Tibial artery (tissue), 4 donors: ENCODE measurements at regions of chr6 and their contacts with region 1.

Region 1: DNA sequence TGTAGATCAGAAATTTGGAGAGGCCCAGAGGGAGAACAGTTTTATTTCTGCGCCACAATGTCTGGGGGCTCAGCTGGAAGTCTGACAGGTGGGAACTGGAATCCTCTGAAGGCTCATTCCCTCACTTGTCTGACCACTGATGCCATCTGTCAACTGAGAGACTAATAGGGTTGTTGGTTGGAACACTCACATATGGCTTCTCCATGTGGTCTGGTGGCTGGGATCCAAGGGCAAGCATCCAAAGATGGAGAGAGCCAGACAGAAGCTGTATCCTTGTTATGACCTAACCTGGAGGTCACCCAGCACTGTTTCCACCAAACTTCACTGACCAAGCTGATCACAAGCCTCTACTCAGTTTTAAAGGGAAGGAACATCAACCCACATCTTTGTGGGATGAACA is 117.9 kb upstream of the AKAP12 start:
- DNase-seq: no peak
- H3K4me3 ChIP-seq: no peak overlapping the region
- H3K27ac ChIP-seq: no peak overlapping the region
- H3K4me1 ChIP-seq: peaks cover 0 to 15% (median 2%) of the 10 kb centered on the region in 4 donors
- H3K27me3 ChIP-seq: no peaks in the 10 kb centered on the region
- CTCF ChIP-seq: no peak

Region 2: DNA sequence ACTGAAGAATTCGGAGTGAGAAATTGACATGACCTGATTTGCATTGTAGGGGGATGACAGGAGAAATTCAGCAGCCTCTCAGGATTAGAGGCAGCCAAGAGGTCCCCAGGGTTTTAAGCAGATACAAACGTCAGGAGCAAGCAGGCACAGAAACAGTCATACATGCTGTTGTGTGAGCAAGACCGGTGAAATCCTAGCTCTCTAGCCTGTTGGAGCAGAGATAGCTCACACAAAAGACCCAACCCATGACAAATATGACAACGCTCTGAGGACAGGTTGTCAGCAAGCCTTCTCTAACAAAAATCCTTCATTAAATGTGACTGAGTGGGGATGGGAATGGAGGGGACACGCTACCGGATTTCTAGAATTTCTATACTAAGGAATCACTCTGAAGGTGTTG is 94.9 kb after region 1 on chr6:
- intact Hi-C with region 1: loop called (anchors 10 kb)
- DNase-seq: no peak
- H3K4me3 ChIP-seq: no peak overlapping the region
- H3K27ac ChIP-seq: no peak overlapping the region
- H3K4me1 ChIP-seq: no peaks in the 10 kb centered on the region
- H3K27me3 ChIP-seq: no peaks in the 10 kb centered on the region
- CTCF ChIP-seq: no peak